Activated CD8-positive, alpha-beta T cell treated with anti-CD3 and anti-CD28 coated beads for 36 hours (primary cell): ENCODE measurements at regions of chr11 and their contacts with region 1.

Region 1: DNA sequence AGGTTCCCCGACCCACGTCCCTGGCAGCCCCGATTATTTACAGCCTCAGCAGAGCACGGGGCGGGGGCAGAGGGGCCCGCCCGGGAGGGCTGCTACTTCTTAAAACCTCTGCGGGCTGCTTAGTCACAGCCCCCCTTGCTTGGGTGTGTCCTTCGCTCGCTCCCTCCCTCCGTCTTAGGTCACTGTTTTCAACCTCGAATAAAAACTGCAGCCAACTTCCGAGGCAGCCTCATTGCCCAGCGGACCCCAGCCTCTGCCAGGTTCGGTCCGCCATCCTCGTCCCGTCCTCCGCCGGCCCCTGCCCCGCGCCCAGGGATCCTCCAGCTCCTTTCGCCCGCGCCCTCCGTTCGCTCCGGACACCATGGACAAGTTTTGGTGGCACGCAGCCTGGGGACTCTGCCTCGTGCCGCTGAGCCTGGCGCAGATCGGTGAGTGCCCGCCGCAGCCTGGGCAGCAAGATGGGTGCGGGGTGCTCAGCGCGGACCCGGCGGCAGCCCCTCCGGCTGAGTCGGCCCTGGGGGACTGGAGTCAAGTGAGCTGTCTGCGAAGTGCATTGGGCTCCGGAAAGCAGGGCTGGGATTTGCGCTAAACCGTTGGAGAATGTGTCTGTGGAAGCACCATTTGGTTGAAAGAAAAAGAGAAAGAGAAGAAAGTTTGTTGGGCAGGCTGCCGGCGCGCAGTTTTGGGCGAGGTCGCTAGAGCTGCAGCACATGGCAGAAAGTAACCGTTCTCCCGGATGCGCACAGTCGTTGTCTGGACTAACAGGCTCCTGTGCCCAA is at the start of gene CD44:
- DNase-seq: peak; percentile 89
- ATAC-seq: peak; percentile 81
- H3K4me3 Mint-ChIP-seq: peak within 1 kb of the TSS; percentile 93
- H3K27ac Mint-ChIP-seq: peak within 1 kb of the TSS; percentile 95
- H3K4me1 Mint-ChIP-seq: peaks cover 47% of the 10 kb centered on the region
- H3K27me3 Mint-ChIP-seq: no peaks in the 10 kb centered on the region
- CTCF ChIP-seq: no peak
- total RNA-seq, gene CD44: 363 to 373 TPM

Region 2: GRCh38 chr11:35096723-35097122 is 42.4 kb before region 1 on chr11:
- CTCF ChIA-PET with region 1: no interaction called
- POLR2A ChIA-PET with region 1: no interaction called
- intact Hi-C with region 1: no loop called
- DNase-seq: no peak
- ATAC-seq: no peak
- H3K4me3 Mint-ChIP-seq: no peak overlapping the region
- H3K27ac Mint-ChIP-seq: no peak overlapping the region
- H3K4me1 Mint-ChIP-seq: peaks cover 18% of the 10 kb centered on the region
- H3K27me3 Mint-ChIP-seq: no peaks in the 10 kb centered on the region
- CTCF ChIP-seq: no peak

Region 3: DNA sequence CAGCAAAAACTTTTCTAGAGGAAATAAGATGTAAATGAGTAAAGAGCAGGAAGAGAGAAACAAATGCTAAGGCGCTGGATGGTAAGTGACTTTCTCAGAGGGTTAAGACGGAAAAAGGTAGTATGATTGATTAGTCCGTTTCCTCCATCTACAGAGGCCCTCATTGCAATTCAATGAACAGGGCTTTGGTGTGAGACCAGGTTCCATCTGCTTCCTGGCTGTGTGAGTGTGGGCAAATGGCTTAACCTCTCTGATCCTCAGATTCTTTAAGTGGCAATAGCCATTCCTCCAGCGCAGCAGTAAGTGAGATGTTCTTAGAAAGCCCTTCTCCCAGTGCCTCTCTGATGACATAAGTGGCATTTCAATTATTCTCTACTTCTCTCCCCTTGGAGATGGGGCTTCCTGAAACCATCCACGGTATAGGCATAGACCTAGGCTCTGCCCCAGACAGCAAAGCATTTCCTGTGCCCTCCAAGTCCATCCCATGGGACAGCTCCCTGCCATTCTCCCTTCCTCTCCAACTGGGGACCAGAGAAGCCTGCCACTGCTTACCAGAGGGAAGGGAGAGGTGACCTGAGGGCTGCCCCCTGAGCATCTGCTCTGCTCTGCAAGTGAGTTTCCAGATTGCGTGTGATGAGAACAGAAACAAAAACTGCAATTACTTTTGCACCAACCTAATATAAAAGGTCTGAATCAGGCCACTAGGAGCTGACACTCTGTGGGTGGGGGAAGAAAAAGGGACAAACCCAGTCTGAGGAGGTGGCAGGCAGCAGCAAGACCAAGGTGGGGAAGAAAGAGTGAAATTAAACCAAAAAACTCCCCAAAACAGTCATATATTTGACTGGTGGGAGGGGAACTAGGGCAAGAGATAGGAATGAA is 12.9 kb before region 1 on chr11:
- CTCF ChIA-PET with region 1: interaction called, 10 read pairs
- POLR2A ChIA-PET with region 1: interaction called, 35 read pairs
- intact Hi-C with region 1: no loop called
- DNase-seq: peak; percentile 81
- ATAC-seq: peak; percentile 84
- H3K4me3 Mint-ChIP-seq: peak overlapping the region; percentile 31
- H3K27ac Mint-ChIP-seq: peak overlapping the region; percentile 80
- H3K4me1 Mint-ChIP-seq: peaks cover 66% of the 10 kb centered on the region
- H3K27me3 Mint-ChIP-seq: no peaks in the 10 kb centered on the region
- CTCF ChIP-seq: peak; percentile 37

Region 4: GRCh38 chr11:35151241-35151640 is 12.1 kb after region 1 on chr11:
- CTCF ChIA-PET with region 1: interaction called, 4 read pairs
- POLR2A ChIA-PET with region 1: interaction called, 203 read pairs
- intact Hi-C with region 1: no loop called
- DNase-seq: no peak
- ATAC-seq: no peak
- H3K4me3 Mint-ChIP-seq: no peak overlapping the region
- H3K27ac Mint-ChIP-seq: peak overlapping the region; percentile 97
- H3K4me1 Mint-ChIP-seq: peaks cover 96% of the 10 kb centered on the region
- H3K27me3 Mint-ChIP-seq: no peaks in the 10 kb centered on the region
- CTCF ChIP-seq: no peak

Region 5: DNA sequence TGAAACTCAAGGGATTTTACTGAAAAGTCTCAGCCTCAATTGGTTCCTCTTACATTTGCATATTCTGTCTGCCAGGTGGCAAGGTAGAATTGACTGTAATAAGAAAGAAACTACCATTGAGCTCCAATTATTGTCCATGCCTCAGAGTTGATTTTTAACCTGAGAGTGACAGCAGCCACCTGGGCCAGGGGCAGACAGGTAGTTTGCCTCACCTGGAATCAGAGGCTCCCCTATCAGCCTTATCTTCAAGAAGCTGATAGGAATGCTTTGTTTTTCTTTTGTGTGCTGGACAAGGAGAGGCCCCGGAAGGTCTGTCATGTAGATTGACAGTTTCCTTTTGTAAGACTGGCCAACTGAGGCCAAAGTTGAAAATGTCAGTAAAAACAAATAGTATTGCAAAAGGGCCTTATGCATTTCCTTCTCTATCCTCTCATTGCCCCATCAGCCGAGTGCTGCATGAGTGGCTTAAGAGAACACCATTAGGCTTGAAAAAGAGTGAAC is 33.9 kb after region 1 on chr11:
- CTCF ChIA-PET with region 1: interaction called, 5 read pairs
- POLR2A ChIA-PET with region 1: interaction called, 203 read pairs
- intact Hi-C with region 1: loop called (anchors 2 kb)
- DNase-seq: no peak
- ATAC-seq: no peak
- H3K4me3 Mint-ChIP-seq: no peak overlapping the region
- H3K27ac Mint-ChIP-seq: peak overlapping the region; percentile 84
- H3K4me1 Mint-ChIP-seq: peaks cover 94% of the 10 kb centered on the region
- H3K27me3 Mint-ChIP-seq: no peaks in the 10 kb centered on the region
- CTCF ChIP-seq: no peak

Region 6: GRCh38 chr11:35214792-35215193 is 75.7 kb after region 1 on chr11:
- CTCF ChIA-PET with region 1: no interaction called
- POLR2A ChIA-PET with region 1: no interaction called
- intact Hi-C with region 1: no loop called
- DNase-seq: peak; percentile 74
- ATAC-seq: peak; percentile 84
- H3K4me3 Mint-ChIP-seq: no peak overlapping the region
- H3K27ac Mint-ChIP-seq: peak overlapping the region; percentile 83
- H3K4me1 Mint-ChIP-seq: peaks cover 68% of the 10 kb centered on the region
- H3K27me3 Mint-ChIP-seq: no peaks in the 10 kb centered on the region
- CTCF ChIP-seq: no peak